ENCODE measurements at regions of chr2 and their contacts with region 1.

Region 1: DNA sequence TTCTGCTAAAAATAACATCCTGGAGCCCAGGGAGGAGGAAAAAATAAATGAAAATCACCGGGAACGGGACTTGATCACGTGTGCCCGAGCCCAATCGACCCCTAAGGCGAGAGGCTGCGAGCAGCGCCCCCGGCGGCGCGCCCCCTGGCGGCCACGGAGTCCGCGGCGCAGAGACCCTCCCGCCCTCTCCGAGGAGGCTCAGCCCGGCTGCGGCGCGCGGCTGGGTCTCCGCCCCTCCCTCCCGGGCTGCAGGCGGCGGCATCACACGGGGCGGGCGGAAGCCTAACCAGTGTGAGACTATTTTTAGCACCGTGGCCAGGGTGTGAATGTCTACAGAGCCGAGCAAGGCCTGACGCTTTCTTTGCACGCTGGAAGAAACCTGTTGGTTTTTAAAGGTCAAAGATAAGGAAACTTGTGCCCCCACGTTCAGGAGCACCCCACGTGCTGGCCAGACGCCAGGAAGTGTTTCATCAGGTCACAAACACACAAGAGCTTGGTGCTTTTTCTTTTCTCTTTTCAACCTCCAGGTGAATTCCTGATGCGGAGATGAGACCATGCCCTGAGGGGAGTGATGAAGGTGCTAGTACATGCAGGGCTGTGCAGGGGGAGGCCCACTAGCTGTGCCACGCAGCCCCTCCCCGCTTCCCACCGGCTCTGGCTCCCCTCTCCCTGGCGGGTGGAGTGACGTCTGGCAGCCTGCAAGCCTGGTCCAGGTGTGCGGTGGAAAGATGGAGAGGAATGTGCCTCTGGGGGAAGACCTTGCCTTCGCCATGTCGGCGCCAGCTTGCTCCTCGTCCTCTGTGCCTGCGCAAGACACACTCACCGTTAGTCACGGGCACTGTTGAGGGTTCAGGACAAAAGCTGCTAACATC is 35.3 kb upstream of the DNMT3A start:
- DNase-seq: peak; percentile 99
- H3K4me3 ChIP-seq: peak overlapping the region; percentile 21 to 45; a peak in 3 of 4 replicates
- H3K27ac ChIP-seq: peak overlapping the region in 1 of 2 experiments; percentile 70; a peak in 2 of 4 replicates
- H3K4me1 ChIP-seq: peaks cover 5 to 36% of the 10 kb centered on the region in 2 experiments; a peak in 3 of 4 replicates
- H3K27me3 ChIP-seq: no peaks in the 10 kb centered on the region
- CTCF ChIP-seq: peak; percentile 99
- EP300 ChIP-seq: no peak
- RAD21 ChIP-seq: peak; percentile 73

Region 2: DNA sequence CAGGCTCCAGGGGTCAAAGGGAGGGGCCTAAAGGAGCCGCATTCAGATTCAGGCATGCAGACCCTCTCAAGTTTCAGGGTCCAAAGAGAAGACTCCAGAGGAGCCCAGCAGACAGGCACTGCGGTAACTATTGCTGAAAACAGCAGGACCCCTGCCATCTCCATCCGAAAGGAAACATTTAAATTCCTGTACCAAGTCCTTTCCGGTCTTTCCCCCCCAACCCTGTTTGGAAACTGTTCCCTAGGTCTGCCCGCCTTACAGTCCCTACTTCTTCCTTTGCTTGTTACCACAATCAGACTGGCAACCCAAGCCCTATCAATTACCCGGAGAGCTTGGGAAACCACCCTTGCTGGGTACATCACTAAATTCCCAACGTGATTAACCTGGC is 117.3 kb before region 1 on chr2:
- CTCF ChIA-PET with region 1: no interaction called
- POLR2A ChIA-PET with region 1: no interaction called
- DNase-seq: no peak
- H3K4me3 ChIP-seq: no peak overlapping the region
- H3K27ac ChIP-seq: peak overlapping the region in 1 of 2 experiments; percentile 99; a peak in 1 of 4 replicates
- H3K4me1 ChIP-seq: peaks cover 11 to 53% of the 10 kb centered on the region in 2 experiments
- H3K27me3 ChIP-seq: no peaks in the 10 kb centered on the region
- CTCF ChIP-seq: no peak
- EP300 ChIP-seq: no peak
- RAD21 ChIP-seq: no peak

Region 3: DNA sequence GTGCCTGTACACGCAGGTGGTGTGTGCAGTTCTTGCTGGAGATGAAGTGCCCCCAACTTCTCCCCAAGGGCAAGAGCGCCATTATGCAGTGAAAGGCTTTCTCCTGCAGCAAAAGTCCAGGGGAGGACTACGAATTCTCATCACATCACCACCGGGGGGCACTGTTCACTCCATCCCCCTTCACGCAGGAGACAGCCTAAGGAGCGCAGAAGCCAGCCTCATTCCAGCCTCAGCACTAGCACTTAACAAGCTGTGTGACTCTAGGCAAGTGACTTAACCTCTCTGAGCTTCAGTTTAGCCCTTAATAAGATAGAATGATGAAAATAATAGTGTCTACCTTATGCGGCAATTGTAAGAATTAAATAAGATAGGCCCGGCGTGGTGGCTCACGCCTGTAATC is 67.6 kb before region 1 on chr2:
- CTCF ChIA-PET with region 1: interaction called, 20 read pairs
- POLR2A ChIA-PET with region 1: no interaction called
- DNase-seq: peak; percentile 85
- H3K4me3 ChIP-seq: no peak overlapping the region; a peak in 1 of 4 replicates
- H3K27ac ChIP-seq: peak overlapping the region in 1 of 2 experiments; percentile 53; a peak in 1 of 4 replicates
- H3K4me1 ChIP-seq: peaks cover 13 to 99% of the 10 kb centered on the region in 2 experiments; a peak in 3 of 4 replicates
- H3K27me3 ChIP-seq: no peaks in the 10 kb centered on the region
- CTCF ChIP-seq: peak; percentile 66
- EP300 ChIP-seq: no peak
- RAD21 ChIP-seq: peak; percentile 74

Region 4: GRCh38 chr2:25349397-25349796 is 27.6 kb before region 1 on chr2:
- CTCF ChIA-PET with region 1: interaction called, 11 read pairs
- POLR2A ChIA-PET with region 1: interaction called, 4 read pairs
- DNase-seq: no peak
- H3K4me3 ChIP-seq: no peak overlapping the region
- H3K27ac ChIP-seq: no peak overlapping the region
- H3K4me1 ChIP-seq: peaks cover 0 to 9% of the 10 kb centered on the region in 2 experiments; a peak in 1 of 4 replicates
- H3K27me3 ChIP-seq: no peaks in the 10 kb centered on the region
- CTCF ChIP-seq: no peak
- EP300 ChIP-seq: no peak
- RAD21 ChIP-seq: no peak

Region 5: DNA sequence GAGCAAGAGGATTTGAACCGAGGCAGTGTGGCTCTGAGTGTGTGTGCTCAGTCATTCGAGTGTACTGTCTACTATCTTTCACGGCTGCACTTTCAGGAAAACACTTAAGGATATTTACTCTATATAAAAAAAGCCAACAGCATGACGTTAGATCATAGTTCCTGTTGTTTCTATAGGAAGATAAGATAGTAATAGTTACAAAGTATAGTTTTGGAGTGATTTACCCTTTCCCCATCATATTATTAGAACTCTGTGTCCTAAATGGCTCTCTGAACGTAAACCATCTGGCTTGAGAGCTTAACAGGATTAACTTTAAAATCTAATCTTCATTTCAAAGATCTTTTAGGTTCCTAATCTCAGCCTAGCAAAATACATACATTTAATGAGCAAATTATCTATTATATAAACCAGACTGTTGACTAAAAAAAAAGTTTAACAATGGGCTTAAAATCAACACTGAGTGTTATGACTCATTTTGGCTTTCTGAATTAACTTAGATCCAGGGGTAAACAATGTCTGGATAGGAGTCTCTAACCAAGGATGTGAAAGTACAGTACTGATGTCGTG is 115.1 kb after region 1 on chr2:
- CTCF ChIA-PET with region 1: interaction called, 11 read pairs
- POLR2A ChIA-PET with region 1: no interaction called
- DNase-seq: peak; percentile 28
- H3K4me3 ChIP-seq: no peak overlapping the region
- H3K27ac ChIP-seq: peak overlapping the region; percentile 2 to 68; a peak in 3 of 4 replicates
- H3K4me1 ChIP-seq: peaks cover 0 to 8% of the 10 kb centered on the region in 2 experiments; a peak in 3 of 4 replicates
- H3K27me3 ChIP-seq: no peaks in the 10 kb centered on the region
- CTCF ChIP-seq: no peak
- EP300 ChIP-seq: no peak; a peak in 1 of 4 replicates
- RAD21 ChIP-seq: no peak

Region 6: GRCh38 chr2:25567406-25567805 is 190.4 kb after region 1 on chr2:
- CTCF ChIA-PET with region 1: interaction called, 13 read pairs
- POLR2A ChIA-PET with region 1: no interaction called
- DNase-seq: peak; percentile 55
- H3K4me3 ChIP-seq: no peak overlapping the region; a peak in 1 of 4 replicates
- H3K27ac ChIP-seq: no peak overlapping the region
- H3K4me1 ChIP-seq: peaks cover 0 to 7% of the 10 kb centered on the region in 2 experiments; a peak in 1 of 4 replicates
- H3K27me3 ChIP-seq: no peaks in the 10 kb centered on the region
- CTCF ChIP-seq: peak; percentile 78
- EP300 ChIP-seq: no peak
- RAD21 ChIP-seq: peak; percentile 81